CD4-positive, alpha-beta T cell (primary cell): ENCODE measurements at regions of chr2 and their contacts with region 1.

Region 1: DNA sequence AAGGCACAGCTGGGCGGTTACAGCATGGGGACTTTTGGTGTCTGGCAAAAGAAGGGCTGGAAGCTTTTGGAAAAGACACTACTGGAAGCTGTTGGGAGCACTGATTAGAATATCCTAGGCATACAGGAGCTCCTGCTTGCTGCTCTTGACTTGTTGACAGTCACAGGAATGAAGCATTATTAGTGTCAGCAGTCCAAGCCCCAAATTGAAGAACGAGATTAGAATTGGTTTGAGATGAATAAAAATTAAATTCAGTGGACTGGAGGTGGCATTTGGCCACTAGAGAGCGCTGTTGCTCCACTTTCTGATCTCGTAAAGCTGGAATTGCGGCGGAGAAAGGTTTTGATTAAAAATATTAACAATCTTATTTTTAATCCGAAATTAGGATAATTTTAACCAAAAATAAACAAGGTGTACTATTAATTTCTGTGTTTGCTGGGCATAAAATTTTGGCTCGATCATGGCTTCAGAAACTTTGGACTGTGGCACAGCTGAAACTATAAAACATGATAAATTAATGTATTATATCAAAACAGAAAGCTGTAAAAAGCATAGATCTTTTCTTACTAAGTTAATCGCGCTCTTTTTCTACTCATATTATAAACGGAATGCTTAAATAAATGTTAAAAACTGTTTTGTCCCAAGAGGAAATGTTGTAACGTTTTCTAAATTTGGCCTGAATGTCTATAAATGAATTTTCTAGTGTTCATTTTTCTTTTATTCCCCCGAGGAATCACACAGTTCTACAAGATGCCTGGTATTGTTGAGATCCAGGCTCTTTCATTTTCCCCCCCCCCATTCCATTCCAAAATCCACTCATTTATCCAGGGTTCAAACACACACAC is 2.4 kb upstream of the HOXD8 start:
- DNase-seq: peak; percentile 54 to 85 (median 65)
- ATAC-seq: no peak
- H3K4me3 ChIP-seq: no peak overlapping the region
- H3K4me3 Mint-ChIP-seq: no peak overlapping the region
- H3K27ac ChIP-seq: no peak overlapping the region
- H3K27ac Mint-ChIP-seq: peak overlapping the region; percentile 38
- H3K4me1 ChIP-seq: peaks cover 43% of the 10 kb centered on the region
- H3K4me1 Mint-ChIP-seq: peaks cover 45% of the 10 kb centered on the region
- H3K27me3 ChIP-seq: peaks cover 79 to 90% of the 10 kb centered on the region in 2 experiments
- H3K27me3 Mint-ChIP-seq: peaks cover 84% of the 10 kb centered on the region
- CTCF ChIP-seq: peak; percentile 99

Region 2: DNA sequence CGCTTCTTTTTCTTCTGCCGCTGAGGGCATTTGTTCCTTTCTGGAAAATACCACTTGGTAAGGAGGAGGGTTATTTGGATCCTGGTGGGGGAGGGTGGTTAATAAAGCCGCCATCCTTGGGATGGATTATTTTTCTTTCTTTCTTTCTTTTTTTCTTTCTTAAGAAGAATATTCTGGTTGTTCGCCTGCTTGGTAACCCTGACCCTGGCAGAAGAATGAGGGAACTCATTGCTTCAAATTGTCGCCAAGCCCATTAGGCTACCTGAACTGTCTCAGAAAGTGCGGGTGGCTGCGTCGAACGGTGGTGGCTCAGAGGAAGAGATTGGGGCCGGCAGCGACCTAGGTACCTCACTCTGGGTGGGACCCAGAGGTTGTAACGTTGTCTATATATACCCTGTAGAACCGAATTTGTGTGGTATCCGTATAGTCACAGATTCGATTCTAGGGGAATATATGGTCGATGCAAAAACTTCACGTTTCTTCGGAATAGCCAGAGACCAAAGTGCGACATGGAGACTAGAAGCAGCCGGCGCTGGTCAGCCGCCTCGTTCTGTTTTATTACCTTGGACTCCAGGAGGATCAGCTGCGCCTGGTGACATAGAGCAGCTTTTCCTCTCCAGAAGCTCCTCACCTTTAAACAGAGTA is 22.9 kb after region 1 on chr2:
- CTCF ChIA-PET with region 1: no interaction called
- POLR2A ChIA-PET with region 1: no interaction called
- intact Hi-C with region 1: no loop called
- DNase-seq: no peak
- ATAC-seq: no peak
- H3K4me3 ChIP-seq: no peak overlapping the region
- H3K4me3 Mint-ChIP-seq: no peak overlapping the region
- H3K27ac ChIP-seq: no peak overlapping the region
- H3K27ac Mint-ChIP-seq: no peak overlapping the region
- H3K4me1 ChIP-seq: peaks cover 11% of the 10 kb centered on the region
- H3K4me1 Mint-ChIP-seq: no peaks in the 10 kb centered on the region
- H3K27me3 ChIP-seq: peaks cover 83 to 96% of the 10 kb centered on the region in 2 experiments
- H3K27me3 Mint-ChIP-seq: peaks cover 94% of the 10 kb centered on the region
- CTCF ChIP-seq: no peak

Region 3: DNA sequence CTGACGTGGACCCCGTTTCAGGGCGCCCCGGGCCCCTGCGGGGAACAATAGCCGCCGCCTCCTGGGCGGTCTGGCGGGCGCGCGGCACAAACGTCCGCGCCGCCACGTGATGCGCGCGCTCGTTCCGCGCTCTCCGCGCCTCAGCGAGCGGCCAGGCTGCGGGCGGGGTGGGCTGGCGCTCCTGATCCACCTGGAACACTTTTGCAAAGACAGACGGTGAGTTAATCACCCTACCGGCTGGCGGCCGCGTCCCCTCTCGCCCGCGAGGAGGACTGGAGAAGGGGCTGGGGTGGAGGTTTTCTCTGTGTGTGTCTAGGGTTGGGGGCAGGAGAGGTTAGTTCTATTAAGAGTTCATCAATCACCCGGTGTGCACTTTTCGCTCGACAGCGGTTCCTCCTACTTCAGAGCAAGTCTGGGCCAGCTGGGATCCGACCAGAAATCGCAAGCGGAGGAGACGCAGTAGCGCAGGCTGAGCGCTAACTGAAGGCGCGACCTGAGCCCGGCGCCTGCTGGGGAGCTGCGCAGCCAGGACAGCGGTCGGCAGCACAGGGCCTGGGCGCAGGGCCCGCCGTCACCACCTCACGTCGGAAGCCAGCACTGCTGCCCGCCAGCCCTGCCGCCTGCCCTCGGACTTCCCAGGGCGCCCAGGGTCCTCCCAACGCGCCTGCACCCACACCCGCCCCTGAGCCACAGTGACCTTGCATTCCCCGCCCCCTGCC is 51.0 kb after region 1 on chr2:
- CTCF ChIA-PET with region 1: no interaction called
- POLR2A ChIA-PET with region 1: no interaction called
- intact Hi-C with region 1: loop called in 1 of 2 experiments (anchors 10 kb)
- DNase-seq: no peak
- ATAC-seq: no peak
- H3K4me3 ChIP-seq: no peak overlapping the region
- H3K4me3 Mint-ChIP-seq: no peak overlapping the region
- H3K27ac ChIP-seq: no peak overlapping the region
- H3K27ac Mint-ChIP-seq: no peak overlapping the region
- H3K4me1 ChIP-seq: peaks cover 15% of the 10 kb centered on the region
- H3K4me1 Mint-ChIP-seq: peaks cover 18% of the 10 kb centered on the region
- H3K27me3 ChIP-seq: peaks cover 62 to 97% of the 10 kb centered on the region in 2 experiments
- H3K27me3 Mint-ChIP-seq: peaks cover 96% of the 10 kb centered on the region
- CTCF ChIP-seq: no peak

Region 4: DNA sequence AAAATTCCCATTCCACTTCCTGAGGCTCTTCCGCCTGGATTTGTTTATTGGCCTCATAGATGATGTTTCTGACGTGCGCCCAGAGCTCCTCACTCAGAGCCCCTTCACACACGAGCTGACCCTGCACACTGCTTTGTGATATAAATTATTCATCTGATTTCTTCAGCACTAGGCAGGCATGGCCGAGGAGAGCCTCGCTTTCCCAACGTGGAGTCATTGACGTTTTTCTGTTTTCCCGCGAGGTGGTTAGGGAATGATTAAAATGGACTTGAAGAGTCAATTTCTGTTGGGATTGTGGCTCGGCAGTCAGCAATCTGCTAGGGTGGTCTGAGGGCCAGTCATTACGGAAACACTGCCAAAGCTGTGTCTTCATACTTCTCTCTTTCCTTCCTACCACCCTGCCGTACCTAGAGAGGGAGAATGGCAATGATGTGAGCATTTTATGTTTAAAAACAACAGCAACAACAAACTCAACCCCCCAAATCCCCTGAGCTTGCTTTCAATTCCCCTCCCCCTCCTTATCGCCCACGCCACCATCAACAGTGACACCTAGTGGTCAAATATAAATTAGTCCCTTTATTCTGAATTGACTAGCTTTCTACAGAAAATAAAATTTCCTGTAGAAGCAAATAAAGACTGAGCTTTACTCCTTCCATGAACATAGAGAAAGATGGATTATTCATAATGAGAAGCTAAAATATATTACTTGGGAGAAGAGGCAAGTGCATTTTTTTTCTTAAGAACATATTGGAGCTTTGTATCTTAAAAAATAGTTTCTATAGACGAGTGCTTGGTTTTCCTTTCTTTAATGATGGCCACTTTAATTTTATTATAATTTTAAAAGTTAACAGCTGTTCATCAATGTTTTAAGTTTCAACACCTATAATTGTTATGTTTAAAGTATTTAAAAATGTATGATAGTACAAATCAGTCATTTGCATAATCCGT is 427.2 kb after region 1 on chr2:
- CTCF ChIA-PET with region 1: interaction called, 5 read pairs
- POLR2A ChIA-PET with region 1: interaction called, 4 read pairs
- intact Hi-C with region 1: loop called (anchors 2 kb)
- DNase-seq: peak in 7 of 14 experiments; percentile 3 to 67 (median 26)
- ATAC-seq: peak; percentile 66
- H3K4me3 ChIP-seq: peak overlapping the region; percentile 43
- H3K4me3 Mint-ChIP-seq: peak overlapping the region; percentile 82
- H3K27ac ChIP-seq: no peak overlapping the region
- H3K27ac Mint-ChIP-seq: no peak overlapping the region
- H3K4me1 ChIP-seq: peaks cover 9% of the 10 kb centered on the region
- H3K4me1 Mint-ChIP-seq: no peaks in the 10 kb centered on the region
- H3K27me3 ChIP-seq: peaks cover 18 to 27% of the 10 kb centered on the region in 2 experiments
- H3K27me3 Mint-ChIP-seq: peaks cover 65% of the 10 kb centered on the region
- CTCF ChIP-seq: peak; percentile 82

Region 5: GRCh38 chr2:176653479-176654443 is 526.6 kb after region 1 on chr2:
- CTCF ChIA-PET with region 1: interaction called, 19 read pairs
- POLR2A ChIA-PET with region 1: no interaction called
- intact Hi-C with region 1: loop called (anchors 1 to 2 kb)
- DNase-seq: peak in 6 of 14 experiments; percentile 7 to 52 (median 18)
- ATAC-seq: peak; percentile 51
- H3K4me3 ChIP-seq: no peak overlapping the region
- H3K4me3 Mint-ChIP-seq: no peak overlapping the region
- H3K27ac ChIP-seq: no peak overlapping the region
- H3K27ac Mint-ChIP-seq: no peak overlapping the region
- H3K4me1 ChIP-seq: peaks cover 3% of the 10 kb centered on the region
- H3K4me1 Mint-ChIP-seq: peaks cover 5% of the 10 kb centered on the region
- H3K27me3 ChIP-seq: peaks cover 10 to 23% of the 10 kb centered on the region in 2 experiments
- H3K27me3 Mint-ChIP-seq: peaks cover 79% of the 10 kb centered on the region
- CTCF ChIP-seq: peak; percentile 30

Region 6: DNA sequence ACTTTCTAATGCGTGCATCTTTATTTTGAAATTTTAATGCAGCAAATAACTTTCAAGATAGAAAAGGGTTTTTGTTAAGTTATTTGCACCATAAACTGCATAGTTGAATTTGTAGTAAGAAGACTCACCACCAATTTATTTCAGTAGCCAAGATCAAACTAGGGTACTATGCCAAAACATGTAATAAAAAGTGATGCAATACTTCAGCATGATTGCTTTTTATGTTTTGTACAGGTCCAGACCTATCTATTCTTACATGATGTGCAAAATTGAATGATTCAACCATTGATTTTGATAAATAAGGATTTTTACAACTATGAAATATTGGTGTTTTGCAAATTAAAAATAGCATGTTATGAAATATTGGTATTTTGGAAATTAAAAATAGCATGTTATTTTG is 1292.1 kb after region 1 on chr2:
- CTCF ChIA-PET with region 1: no interaction called
- POLR2A ChIA-PET with region 1: no interaction called
- intact Hi-C with region 1: loop called in 1 of 2 experiments (anchors 10 kb)
- DNase-seq: no peak
- ATAC-seq: no peak
- H3K4me3 ChIP-seq: no peak overlapping the region
- H3K4me3 Mint-ChIP-seq: no peak overlapping the region
- H3K27ac ChIP-seq: no peak overlapping the region
- H3K27ac Mint-ChIP-seq: no peak overlapping the region
- H3K4me1 ChIP-seq: no peaks in the 10 kb centered on the region
- H3K4me1 Mint-ChIP-seq: peaks cover 29% of the 10 kb centered on the region
- H3K27me3 ChIP-seq: no peaks in the 10 kb centered on the region
- H3K27me3 Mint-ChIP-seq: no peaks in the 10 kb centered on the region
- CTCF ChIP-seq: no peak